ENCODE measurements at regions of chr1 and their contacts with region 1.

Region 1: DNA sequence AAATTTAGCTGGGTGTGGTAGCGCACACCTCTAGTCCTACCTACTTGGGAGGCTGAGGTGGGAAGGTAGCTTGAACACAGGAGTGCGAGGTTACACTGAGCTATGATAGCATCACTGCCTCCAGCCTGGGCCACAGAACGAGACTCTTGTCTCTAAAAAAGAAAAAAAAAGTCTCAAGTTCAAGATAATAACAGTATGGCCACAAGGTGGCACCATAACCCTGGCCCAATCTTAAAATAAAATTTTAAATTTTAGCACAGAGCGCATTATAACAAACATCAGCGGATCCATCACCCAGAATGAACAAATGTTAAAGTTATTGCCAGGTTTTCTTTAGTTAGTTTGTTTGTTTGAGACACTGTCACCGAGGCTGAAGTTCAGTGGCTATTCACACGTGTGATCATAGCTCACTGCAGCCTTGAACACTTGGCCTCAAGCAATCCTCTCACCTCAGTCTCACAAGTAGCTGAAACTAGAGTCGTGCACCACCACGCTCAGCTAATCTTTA is 2.9 kb upstream of the HTR6 start:
- DNase-seq: peak in 2 of 4 experiments; percentile 28 to 65
- ATAC-seq: no peak
- H3K4me3 ChIP-seq: no peak overlapping the region
- H3K27ac ChIP-seq: no peak overlapping the region
- H3K4me1 ChIP-seq: peaks cover 0 to 25% of the 10 kb centered on the region in 2 experiments; a peak in 2 of 5 replicates
- H3K27me3 ChIP-seq: peaks cover 27 to 62% of the 10 kb centered on the region in 2 experiments; a peak in 4 of 5 replicates
- CTCF ChIP-seq: peak; percentile 63 to 89 (median 78)
- EP300 ChIP-seq: no peak
- POLR2A ChIP-seq: no peak
- RAD21 ChIP-seq: peak; percentile 53 to 75

Region 2: GRCh38 chr1:19704247-19705113 is 42.7 kb after region 1 on chr1:
- CTCF ChIA-PET with region 1: interaction called, 8 read pairs
- POLR2A ChIA-PET with region 1: no interaction called
- in situ Hi-C with region 1: no loop called
- intact Hi-C with region 1: loop called (anchors 1 kb)
- DNase-seq: peak; percentile 69 to 86 (median 84)
- ATAC-seq: peak; percentile 97
- H3K4me3 ChIP-seq: no peak overlapping the region
- H3K27ac ChIP-seq: no peak overlapping the region
- H3K4me1 ChIP-seq: no peaks in the 10 kb centered on the region
- H3K27me3 ChIP-seq: peaks cover 17 to 53% of the 10 kb centered on the region in 2 experiments
- CTCF ChIP-seq: peak; percentile 89 to 96 (median 91)
- EP300 ChIP-seq: no peak
- POLR2A ChIP-seq: no peak
- RAD21 ChIP-seq: peak in 1 of 2 experiments; percentile 72; a peak in 2 of 4 replicates

Measured in K562 (cell line).